WTC11 (cell line): ENCODE measurements at regions of chr3 and their contacts with region 1.

Region 1: GRCh38 chr3:157606011-157606851 is 103.0 kb upstream of the VEPH1 start:
- DNase-seq: peak; percentile 84
- ATAC-seq: peak; percentile 96
- H3K4me3 Mint-ChIP-seq: no peak overlapping the region; the same call in 1 of the 2 replicates
- H3K27ac Mint-ChIP-seq: peak overlapping the region; percentile 44; the same call in 1 of the 2 replicates
- H3K4me1 Mint-ChIP-seq: peaks cover 13% of the 10 kb centered on the region
- H3K27me3 Mint-ChIP-seq: no peaks in the 10 kb centered on the region
- CTCF ChIP-seq: peak; percentile 87

Region 2: GRCh38 chr3:157542711-157543500 is 63.3 kb before region 1 on chr3:
- CTCF ChIA-PET with region 1: interaction called, 14 read pairs
- POLR2A ChIA-PET with region 1: interaction called, 3 read pairs
- DNase-seq: peak; percentile 72
- ATAC-seq: peak; percentile 92
- H3K4me3 Mint-ChIP-seq: peak overlapping the region; percentile 78
- H3K27ac Mint-ChIP-seq: no peak overlapping the region
- H3K4me1 Mint-ChIP-seq: 0 out of 2 replicates have a peak, but pooled peaks cover 3% of the 10 kb centered on the region
- H3K27me3 Mint-ChIP-seq: peaks cover 24% of the 10 kb centered on the region
- CTCF ChIP-seq: 0 out of 2 replicates have a peak, but pooled peaks have one; percentile 23

Region 3: GRCh38 chr3:157581371-157581770 is 24.9 kb before region 1 on chr3:
- CTCF ChIA-PET with region 1: interaction called, 13 read pairs
- POLR2A ChIA-PET with region 1: no interaction called
- DNase-seq: no peak
- ATAC-seq: no peak
- H3K4me3 Mint-ChIP-seq: no peak overlapping the region
- H3K27ac Mint-ChIP-seq: no peak overlapping the region
- H3K4me1 Mint-ChIP-seq: no peaks in the 10 kb centered on the region
- H3K27me3 Mint-ChIP-seq: no peaks in the 10 kb centered on the region
- CTCF ChIP-seq: no peak

Region 4: DNA sequence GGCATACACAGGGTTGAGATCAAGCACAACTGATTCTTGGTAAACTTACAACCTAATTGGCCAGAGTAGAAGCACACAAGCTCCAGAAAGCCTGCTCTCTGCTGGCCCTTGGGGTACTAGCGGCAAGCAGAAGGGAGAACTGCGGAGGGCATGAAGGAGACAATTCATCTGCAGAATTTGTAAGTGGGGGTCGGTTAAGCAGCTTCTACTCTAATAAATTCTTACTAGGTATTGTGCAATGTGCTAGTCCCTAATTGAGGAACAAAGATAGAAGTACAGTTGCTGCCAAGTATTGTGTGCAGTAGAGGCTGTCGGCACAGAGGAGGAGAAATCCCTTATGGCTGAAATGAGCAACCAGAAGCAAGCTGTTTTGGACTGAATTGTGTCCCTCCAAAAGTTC is 11.8 kb before region 1 on chr3:
- CTCF ChIA-PET with region 1: interaction called, 30 read pairs
- POLR2A ChIA-PET with region 1: no interaction called
- DNase-seq: peak; percentile 16
- ATAC-seq: peak; percentile 89
- H3K4me3 Mint-ChIP-seq: no peak overlapping the region
- H3K27ac Mint-ChIP-seq: no peak overlapping the region
- H3K4me1 Mint-ChIP-seq: peaks cover 4% of the 10 kb centered on the region
- H3K27me3 Mint-ChIP-seq: no peaks in the 10 kb centered on the region
- CTCF ChIP-seq: no peak

Region 5: DNA sequence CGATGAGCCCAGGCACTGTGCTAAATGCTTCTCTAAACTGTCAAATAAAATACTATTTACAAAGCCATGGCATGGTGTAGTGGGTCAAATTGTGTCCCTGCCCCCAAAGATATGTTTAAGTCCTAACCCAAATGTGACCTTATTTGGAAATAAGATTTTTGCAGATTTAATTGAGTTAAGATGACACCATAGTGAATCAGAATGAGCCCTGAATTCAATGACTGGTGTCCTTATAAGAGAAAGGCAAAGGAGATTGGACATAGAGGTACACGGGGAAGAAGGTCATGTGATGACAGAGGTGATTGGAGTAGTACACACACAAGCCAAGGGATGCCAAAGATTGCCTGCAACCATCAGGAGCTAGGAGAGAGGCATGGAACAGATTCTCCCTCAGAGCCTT is 18.6 kb after region 1 on chr3:
- CTCF ChIA-PET with region 1: interaction called, 11 read pairs
- POLR2A ChIA-PET with region 1: no interaction called
- DNase-seq: no peak
- ATAC-seq: no peak
- H3K4me3 Mint-ChIP-seq: no peak overlapping the region
- H3K27ac Mint-ChIP-seq: no peak overlapping the region
- H3K4me1 Mint-ChIP-seq: no peaks in the 10 kb centered on the region
- H3K27me3 Mint-ChIP-seq: no peaks in the 10 kb centered on the region
- CTCF ChIP-seq: no peak